PC-9 (cell line): ENCODE measurements at regions of chr6 and their contacts with region 1.

Region 1: GRCh38 chr6:73180763-73181619 is 44.3 kb downstream of the KHDC1L start:
- DNase-seq: peak; percentile 20 to 55
- H3K4me3 ChIP-seq: no peak overlapping the region; the same call in 1 of the 2 replicates
- H3K27ac ChIP-seq: no peak overlapping the region
- H3K4me1 ChIP-seq: no peaks in the 10 kb centered on the region
- H3K27me3 ChIP-seq: no peaks in the 10 kb centered on the region
- CTCF ChIP-seq: peak; percentile 90

Region 2: GRCh38 chr6:71533939-71534379 is 1647.0 kb before region 1 on chr6:
- CTCF ChIA-PET with region 1: no interaction called
- POLR2A ChIA-PET with region 1: no interaction called
- intact Hi-C with region 1: loop called (anchors 10 kb)
- DNase-seq: no peak
- H3K4me3 ChIP-seq: no peak overlapping the region
- H3K27ac ChIP-seq: no peak overlapping the region
- H3K4me1 ChIP-seq: peaks cover 10% of the 10 kb centered on the region
- H3K27me3 ChIP-seq: no peaks in the 10 kb centered on the region
- CTCF ChIP-seq: peak; percentile 81

Region 3: GRCh38 chr6:72140795-72141194 is 1040.2 kb before region 1 on chr6:
- CTCF ChIA-PET with region 1: no interaction called
- POLR2A ChIA-PET with region 1: no interaction called
- intact Hi-C with region 1: loop called (anchors 5 kb)
- DNase-seq: no peak
- H3K4me3 ChIP-seq: no peak overlapping the region
- H3K27ac ChIP-seq: no peak overlapping the region
- H3K4me1 ChIP-seq: no peaks in the 10 kb centered on the region
- H3K27me3 ChIP-seq: no peaks in the 10 kb centered on the region
- CTCF ChIP-seq: no peak

Region 4: DNA sequence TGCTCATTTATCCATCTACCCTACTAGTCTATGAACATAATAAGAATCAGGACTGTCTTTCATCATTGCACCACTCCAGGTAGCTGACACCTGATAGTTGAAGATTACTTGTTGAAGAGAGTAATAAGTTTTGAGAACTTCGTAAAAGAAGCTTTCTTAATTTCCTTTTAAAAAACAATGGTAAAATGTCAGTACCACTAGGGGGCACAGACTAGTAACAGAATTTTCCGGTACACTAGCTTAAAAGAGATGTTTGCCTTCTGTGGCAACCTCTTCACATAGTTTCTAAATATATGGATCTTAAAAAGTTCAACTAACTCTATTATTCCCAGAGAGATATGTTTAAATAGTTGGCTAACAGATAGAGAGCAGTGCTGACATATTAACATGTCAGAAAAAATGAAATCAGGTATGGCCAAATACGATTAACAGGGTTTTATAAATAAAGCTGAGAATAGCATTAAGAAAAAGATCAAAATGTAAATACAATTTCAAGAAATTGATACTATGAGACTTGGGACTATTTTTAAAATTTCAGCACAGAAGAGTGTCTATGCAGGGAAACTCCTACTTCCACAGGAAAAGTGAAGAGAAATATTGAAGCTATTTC is 564.5 kb before region 1 on chr6:
- CTCF ChIA-PET with region 1: interaction called, 4 read pairs
- POLR2A ChIA-PET with region 1: no interaction called
- intact Hi-C with region 1: loop called (anchors 2 kb)
- DNase-seq: no peak
- H3K4me3 ChIP-seq: no peak overlapping the region
- H3K27ac ChIP-seq: no peak overlapping the region
- H3K4me1 ChIP-seq: no peaks in the 10 kb centered on the region
- H3K27me3 ChIP-seq: no peaks in the 10 kb centered on the region
- CTCF ChIP-seq: peak; percentile 72

Region 5: DNA sequence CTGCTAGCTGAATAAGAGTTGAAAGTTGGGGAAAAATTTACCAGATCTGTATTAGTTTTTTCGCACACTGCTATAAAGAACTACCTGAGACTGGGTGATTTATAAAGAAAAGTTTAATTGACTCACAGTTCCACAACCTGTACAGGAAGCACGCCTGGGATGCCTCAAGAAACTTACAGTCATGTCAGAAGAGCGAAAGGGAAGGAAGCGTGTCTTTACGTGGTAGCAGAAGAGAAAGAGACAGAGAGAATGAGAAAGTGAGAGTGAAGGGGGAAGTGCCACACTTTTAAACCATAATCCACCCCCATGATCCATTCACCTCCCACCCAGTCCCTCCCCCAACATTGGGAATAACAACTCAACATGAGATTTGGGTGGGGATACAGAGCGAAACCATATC is 35.3 kb before region 1 on chr6:
- CTCF ChIA-PET with region 1: no interaction called
- POLR2A ChIA-PET with region 1: no interaction called
- intact Hi-C with region 1: no loop called
- DNase-seq: no peak
- H3K4me3 ChIP-seq: no peak overlapping the region
- H3K27ac ChIP-seq: no peak overlapping the region
- H3K4me1 ChIP-seq: no peaks in the 10 kb centered on the region
- H3K27me3 ChIP-seq: no peaks in the 10 kb centered on the region
- CTCF ChIP-seq: no peak

Region 6: DNA sequence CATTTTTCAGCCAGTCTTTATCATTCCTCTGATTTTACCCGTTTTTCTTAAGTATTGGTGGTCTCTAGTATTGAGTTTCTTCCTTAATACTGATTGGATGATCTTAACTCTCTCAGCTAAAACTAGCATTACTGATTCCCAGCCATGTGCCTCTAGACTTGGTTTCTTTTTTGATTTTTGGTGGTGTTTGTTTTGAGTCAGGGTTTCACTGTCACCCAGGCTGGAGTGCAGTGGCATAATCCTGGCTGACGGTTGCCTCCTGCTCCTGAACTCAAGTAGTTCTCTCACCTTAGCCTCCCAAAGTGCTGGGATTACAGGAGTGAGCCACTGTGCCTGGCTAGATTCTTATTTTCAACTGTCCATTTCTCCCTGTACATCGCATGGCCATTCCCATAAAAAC is 148.2 kb after region 1 on chr6:
- CTCF ChIA-PET with region 1: no interaction called
- POLR2A ChIA-PET with region 1: no interaction called
- intact Hi-C with region 1: loop called (anchors 2 kb)
- DNase-seq: no peak
- H3K4me3 ChIP-seq: no peak overlapping the region
- H3K27ac ChIP-seq: no peak overlapping the region
- H3K4me1 ChIP-seq: no peaks in the 10 kb centered on the region
- H3K27me3 ChIP-seq: no peaks in the 10 kb centered on the region
- CTCF ChIP-seq: no peak